Activated naive CD4-positive, alpha-beta T cell treated with anti-CD3 and anti-CD28 coated beads, Interleukin-2, amount 10 ng/mL, durations not matched to agents 7 days and 5 days (primary cell): ENCODE measurements at regions of chr1 and their contacts with region 1.

Region 1: DNA sequence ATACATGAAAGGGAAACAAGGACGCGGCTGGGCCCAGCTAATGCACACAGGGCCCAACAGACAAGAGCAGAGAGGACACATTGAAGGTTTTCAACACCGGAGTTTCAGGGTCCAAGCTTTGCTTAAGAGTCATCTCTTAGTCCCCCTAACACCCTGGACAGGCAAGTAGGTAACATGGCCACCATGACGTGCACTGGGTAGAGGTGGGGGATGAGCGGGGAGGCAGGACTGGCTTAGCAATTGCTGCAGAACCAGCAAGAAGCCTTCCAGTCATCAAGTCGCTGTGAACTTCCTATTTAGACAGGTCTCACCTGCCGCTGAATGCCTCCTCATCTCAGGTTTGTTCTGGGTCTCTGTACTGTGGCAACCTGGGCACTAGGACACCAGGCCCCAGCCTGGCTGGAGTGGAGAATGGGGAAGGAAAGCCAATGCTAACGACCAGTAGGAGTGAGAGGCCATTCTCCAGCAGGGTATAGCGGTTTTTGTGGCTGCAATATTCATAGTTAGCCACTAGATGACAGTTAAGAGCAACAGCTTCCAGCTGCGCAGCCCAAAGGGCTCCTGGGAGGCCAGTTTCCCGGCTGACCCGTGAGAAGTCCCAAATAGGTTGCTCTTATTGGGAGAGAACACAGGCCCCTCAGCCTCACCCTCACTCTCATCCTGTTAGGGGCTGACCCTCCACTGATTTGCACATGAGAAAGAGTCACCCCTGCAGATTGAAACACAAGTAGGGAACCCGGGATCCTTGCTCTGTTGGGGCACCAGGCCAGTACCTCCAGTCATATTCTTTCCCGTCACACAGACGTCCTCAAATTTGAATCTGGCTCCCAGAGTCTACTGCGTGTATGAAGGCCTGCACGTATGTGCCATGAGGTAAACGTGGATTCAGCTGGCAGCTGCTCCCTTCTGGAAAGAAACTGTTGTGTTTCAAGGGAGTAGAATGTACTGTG is 6.0 kb upstream of the PIGC start:
- DNase-seq: peak; percentile 52
- H3K4me3 Mint-ChIP-seq: peak overlapping the region; percentile 5
- H3K27ac Mint-ChIP-seq: peak overlapping the region; percentile 88
- H3K4me1 Mint-ChIP-seq: peaks cover 26% of the 10 kb centered on the region
- H3K27me3 Mint-ChIP-seq: no peaks in the 10 kb centered on the region

Region 2: GRCh38 chr1:172390683-172391551 is 58.9 kb before region 1 on chr1:
- CTCF ChIA-PET with region 1: no interaction called
- DNase-seq: no peak
- H3K4me3 Mint-ChIP-seq: no peak overlapping the region
- H3K27ac Mint-ChIP-seq: no peak overlapping the region
- H3K4me1 Mint-ChIP-seq: peaks cover 47% of the 10 kb centered on the region
- H3K27me3 Mint-ChIP-seq: no peaks in the 10 kb centered on the region

Region 3: DNA sequence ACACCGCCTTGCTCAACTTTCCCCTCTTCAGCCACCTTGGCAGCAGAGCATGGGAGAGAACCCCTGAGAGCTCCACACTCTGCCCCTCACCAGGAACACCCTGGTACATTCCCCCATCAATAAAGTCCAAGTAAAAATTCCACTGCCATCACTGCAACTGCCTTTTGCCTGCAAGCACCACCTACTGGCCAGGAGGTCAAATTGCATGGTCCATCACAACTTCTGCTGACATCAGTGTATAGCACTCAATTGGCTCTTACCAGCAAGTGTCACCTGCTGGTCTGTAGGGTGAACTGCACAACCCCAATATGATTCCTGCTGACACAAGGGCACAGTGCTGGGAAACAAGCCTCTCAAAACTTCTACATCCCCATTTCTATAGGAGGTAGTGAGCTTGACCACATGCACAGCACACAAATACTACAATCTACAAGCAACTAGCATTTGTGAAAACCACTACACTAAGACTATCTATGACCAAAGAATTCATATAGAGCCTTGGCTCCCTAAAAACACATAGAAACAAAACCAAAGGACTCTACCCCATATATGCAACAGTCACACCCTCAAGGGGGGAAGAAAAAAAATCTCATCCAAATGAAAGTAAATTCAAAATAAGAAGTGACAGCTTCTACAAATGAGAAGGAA is 278.2 kb after region 1 on chr1:
- CTCF ChIA-PET with region 1: interaction called, 39 read pairs
- DNase-seq: peak; percentile 63
- H3K4me3 Mint-ChIP-seq: no peak overlapping the region
- H3K27ac Mint-ChIP-seq: no peak overlapping the region
- H3K4me1 Mint-ChIP-seq: peaks cover 25% of the 10 kb centered on the region
- H3K27me3 Mint-ChIP-seq: peaks cover 24% of the 10 kb centered on the region